ENCODE measurements at regions of chr2 and their contacts with region 1.

Region 1: GRCh38 chr2:169824373-169825333 is at the start of gene METTL5:
- DNase-seq: peak; percentile 84
- ATAC-seq: peak; percentile 73
- H3K4me3 Mint-ChIP-seq: peak within 1 kb of the TSS; percentile 92
- H3K27ac Mint-ChIP-seq: peak within 1 kb of the TSS; percentile 85
- H3K4me1 Mint-ChIP-seq: peaks cover 51% of the 10 kb centered on the region
- H3K27me3 Mint-ChIP-seq: no peaks in the 10 kb centered on the region
- CTCF ChIP-seq: peak; percentile 40
- total RNA-seq, gene METTL5: 48.3 and 51.1 TPM in 2 replicates

Region 2: DNA sequence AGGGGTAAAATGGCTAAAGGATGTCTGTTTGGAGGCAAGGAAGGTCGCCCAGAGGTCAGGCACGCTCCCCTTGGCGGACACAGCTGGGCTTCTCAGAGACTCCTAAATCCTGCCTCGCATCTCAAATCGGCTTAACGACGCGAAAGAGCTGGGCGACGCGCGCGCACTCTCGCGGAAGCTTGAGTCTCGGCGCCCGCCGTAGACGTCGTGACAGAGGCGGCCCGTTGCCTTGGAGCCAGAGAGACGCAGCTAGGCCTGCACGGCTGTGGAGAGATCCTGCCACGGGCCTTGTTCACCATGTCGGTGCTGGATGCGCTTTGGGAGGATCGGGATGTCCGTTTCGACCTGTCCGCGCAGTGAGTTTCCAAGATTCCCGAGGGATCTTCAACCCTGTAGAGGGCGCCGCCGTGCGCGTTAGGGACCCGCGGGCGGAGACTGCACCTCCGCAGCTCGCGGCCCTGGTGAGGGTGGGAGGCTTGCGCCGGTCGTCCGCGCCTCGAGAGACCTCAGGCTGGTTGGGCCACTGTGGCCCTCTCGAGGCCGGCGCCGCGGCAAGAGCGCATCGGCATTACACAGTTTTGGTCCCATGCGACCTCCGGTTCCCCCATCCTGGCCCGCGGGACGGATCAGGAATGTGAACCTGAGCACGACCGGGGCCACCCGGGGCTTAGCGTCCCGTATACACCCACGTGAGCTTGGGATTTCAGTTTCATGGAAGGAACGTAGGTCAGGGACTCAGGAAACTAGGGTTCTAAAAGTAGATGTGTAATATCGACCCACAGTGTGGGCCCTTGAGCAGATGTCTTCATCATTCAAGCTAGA is 345.2 kb before region 1 on chr2 and contains the start of gene BBS5:
- CTCF ChIA-PET with region 1: no interaction called
- POLR2A ChIA-PET with region 1: no interaction called
- intact Hi-C with region 1: loop called (anchors 1 kb)
- DNase-seq: peak; percentile 55
- ATAC-seq: peak; percentile 95
- H3K4me3 Mint-ChIP-seq: peak within 1 kb of the TSS; percentile 91
- H3K27ac Mint-ChIP-seq: peak within 1 kb of the TSS; percentile 24
- H3K4me1 Mint-ChIP-seq: peaks cover 10% of the 10 kb centered on the region
- H3K27me3 Mint-ChIP-seq: no peaks in the 10 kb centered on the region
- CTCF ChIP-seq: no peak
- total RNA-seq, gene BBS5: 2.3 and 2.8 TPM in 2 replicates

Region 3: GRCh38 chr2:169584005-169584877 is 240.4 kb before region 1 on chr2 and contains the start of gene PPIG:
- CTCF ChIA-PET with region 1: no interaction called
- POLR2A ChIA-PET with region 1: interaction called, 5 read pairs
- intact Hi-C with region 1: loop called (anchors 1 kb)
- DNase-seq: peak; percentile 75
- ATAC-seq: peak; percentile 89
- H3K4me3 Mint-ChIP-seq: peak within 1 kb of the TSS; percentile 99
- H3K27ac Mint-ChIP-seq: peak within 1 kb of the TSS; percentile 99
- H3K4me1 Mint-ChIP-seq: peaks cover 39% of the 10 kb centered on the region
- H3K27me3 Mint-ChIP-seq: no peaks in the 10 kb centered on the region
- CTCF ChIP-seq: no peak
- total RNA-seq, gene PPIG: 68.0 and 69.8 TPM in 2 replicates

Region 4: DNA sequence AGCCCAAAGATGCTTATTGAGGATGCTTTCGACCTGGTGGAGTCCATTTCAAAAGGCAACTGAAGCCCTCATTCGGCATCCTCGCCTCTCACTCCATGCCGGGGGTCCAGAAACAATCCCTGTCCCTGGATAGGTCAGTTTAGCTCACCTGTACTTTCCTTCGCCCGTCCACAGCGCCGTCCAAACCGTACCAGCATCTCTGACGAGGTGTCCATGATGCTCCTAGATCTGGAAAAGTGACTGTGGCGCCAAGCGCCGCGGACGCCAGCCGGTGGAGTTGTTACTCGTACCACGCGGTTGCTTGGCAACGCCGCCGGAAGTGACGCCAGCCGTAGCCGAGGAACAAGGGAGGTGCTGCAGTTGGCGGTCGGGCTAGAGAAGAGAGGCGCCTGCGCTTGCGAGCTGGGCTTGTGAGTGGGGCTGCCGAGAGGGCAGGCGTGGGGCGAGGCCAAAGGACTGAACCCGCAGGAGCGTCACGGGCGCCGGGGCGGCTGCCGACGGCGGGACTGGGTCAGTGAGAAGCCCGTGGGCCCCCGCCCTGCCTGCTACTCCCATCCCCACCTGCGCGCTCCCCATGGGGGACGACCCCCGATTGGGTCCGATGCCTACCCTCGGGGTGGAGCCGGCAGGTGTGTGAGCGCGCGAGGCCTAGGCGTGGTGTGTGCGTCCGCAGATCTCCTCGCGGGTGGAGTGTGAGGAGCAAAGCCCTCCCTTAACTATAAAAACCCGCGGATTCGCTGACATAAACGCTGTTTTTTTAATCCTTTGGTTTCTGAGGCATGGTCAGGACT is 130.3 kb before region 1 on chr2 and contains the starts of genes CFAP210 and PHOSPHO2:
- CTCF ChIA-PET with region 1: no interaction called
- POLR2A ChIA-PET with region 1: interaction called, 6 read pairs
- intact Hi-C with region 1: loop called (anchors 1 kb)
- DNase-seq: peak; percentile 98
- ATAC-seq: peak; percentile 97
- H3K4me3 Mint-ChIP-seq: peak within 1 kb of the TSS; percentile 91
- H3K27ac Mint-ChIP-seq: peak within 1 kb of the TSS; percentile 94
- H3K4me1 Mint-ChIP-seq: peaks cover 16% of the 10 kb centered on the region
- H3K27me3 Mint-ChIP-seq: peaks cover 2% of the 10 kb centered on the region
- CTCF ChIP-seq: no peak
- total RNA-seq, gene CFAP210: not detected in 2 replicates
- total RNA-seq, gene PHOSPHO2: 3.2 and 6.3 TPM in 2 replicates

Region 5: GRCh38 chr2:169732583-169733358 is 91.9 kb before region 1 on chr2:
- CTCF ChIA-PET with region 1: no interaction called
- POLR2A ChIA-PET with region 1: no interaction called
- intact Hi-C with region 1: loop called (anchors 2 kb)
- DNase-seq: no peak
- ATAC-seq: no peak
- H3K4me3 Mint-ChIP-seq: peak overlapping the region; percentile 90
- H3K27ac Mint-ChIP-seq: no peak overlapping the region
- H3K4me1 Mint-ChIP-seq: peaks cover 15% of the 10 kb centered on the region
- H3K27me3 Mint-ChIP-seq: peaks cover 12% of the 10 kb centered on the region
- CTCF ChIP-seq: no peak

Region 6: GRCh38 chr2:169798718-169799592 is 25.7 kb before region 1 on chr2 and contains the start of gene SSB:
- CTCF ChIA-PET with region 1: interaction called, 7 read pairs
- POLR2A ChIA-PET with region 1: interaction called, 26 read pairs
- intact Hi-C with region 1: loop called (anchors 1 kb)
- DNase-seq: peak; percentile 89
- ATAC-seq: peak; percentile 96
- H3K4me3 Mint-ChIP-seq: peak within 1 kb of the TSS; percentile 91
- H3K27ac Mint-ChIP-seq: peak within 1 kb of the TSS; percentile 94
- H3K4me1 Mint-ChIP-seq: peaks cover 22% of the 10 kb centered on the region
- H3K27me3 Mint-ChIP-seq: no peaks in the 10 kb centered on the region
- CTCF ChIP-seq: no peak
- total RNA-seq, gene SSB: 94.7 and 100 TPM in 2 replicates

Region 7: GRCh38 chr2:169933124-169933711 is 108.6 kb after region 1 on chr2:
- CTCF ChIA-PET with region 1: interaction called, 12 read pairs
- POLR2A ChIA-PET with region 1: no interaction called
- intact Hi-C with region 1: loop called (anchors 1 kb)
- DNase-seq: no peak
- ATAC-seq: peak; percentile 52
- H3K4me3 Mint-ChIP-seq: no peak overlapping the region
- H3K27ac Mint-ChIP-seq: no peak overlapping the region
- H3K4me1 Mint-ChIP-seq: no peaks in the 10 kb centered on the region
- H3K27me3 Mint-ChIP-seq: no peaks in the 10 kb centered on the region
- CTCF ChIP-seq: no peak